ENCODE measurements at regions of chr5 and their contacts with region 1.

Region 1: DNA sequence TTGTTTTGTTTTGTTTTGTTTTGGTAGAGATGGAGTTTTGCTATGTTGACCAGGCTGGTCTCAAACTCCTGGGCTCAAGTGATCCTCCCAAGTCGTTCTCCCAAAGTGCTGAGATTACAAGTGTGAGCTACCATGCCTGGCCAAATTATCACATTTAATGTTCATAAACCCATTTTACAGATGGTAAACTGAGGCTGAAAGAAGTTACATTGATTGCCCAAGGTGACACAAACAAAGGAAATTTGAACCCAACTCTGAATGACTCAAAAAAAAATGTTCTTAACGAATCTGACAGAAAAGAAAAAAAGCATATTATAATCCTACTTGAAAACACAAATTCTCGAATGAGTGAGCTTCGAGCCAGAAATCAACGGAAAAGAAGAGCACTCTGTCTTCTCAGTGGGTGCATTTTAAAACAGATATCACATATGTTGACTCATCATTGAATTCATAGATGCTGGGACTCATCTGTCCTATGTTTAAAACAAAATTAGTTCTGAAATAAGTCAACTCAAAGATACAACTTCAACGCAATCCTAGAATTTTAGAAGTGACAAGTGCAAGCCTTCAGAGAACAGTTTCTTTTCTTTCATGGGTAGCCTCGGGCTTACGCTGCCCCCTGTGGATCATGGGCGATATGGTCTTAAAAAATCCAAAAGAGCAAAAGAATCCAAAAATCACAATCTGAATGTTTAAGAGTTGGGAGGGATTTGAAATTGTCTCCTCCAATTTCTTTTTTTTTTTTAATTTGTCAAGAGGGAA is 28.4 kb downstream of the TIMD4 start:
- DNase-seq: peak; percentile 24 to 68 (median 49)
- H3K4me3 ChIP-seq: no peak overlapping the region
- H3K4me3 Mint-ChIP-seq: peak overlapping the region in 6 of 7 donors; percentile 27 to 78 (median 74)
- H3K27ac ChIP-seq: no peak overlapping the region
- H3K27ac Mint-ChIP-seq: peak overlapping the region in 4 of 8 donors; percentile 35 to 81 (median 53)
- H3K4me1 ChIP-seq: peaks cover 19% of the 10 kb centered on the region
- H3K4me1 Mint-ChIP-seq: peaks cover 39 to 52% (median 43%) of the 10 kb centered on the region in 3 donors
- H3K27me3 ChIP-seq: no peaks in the 10 kb centered on the region
- H3K27me3 Mint-ChIP-seq: peaks cover 0 to under 1% of the 10 kb centered on the region in 2 donors

Region 2: DNA sequence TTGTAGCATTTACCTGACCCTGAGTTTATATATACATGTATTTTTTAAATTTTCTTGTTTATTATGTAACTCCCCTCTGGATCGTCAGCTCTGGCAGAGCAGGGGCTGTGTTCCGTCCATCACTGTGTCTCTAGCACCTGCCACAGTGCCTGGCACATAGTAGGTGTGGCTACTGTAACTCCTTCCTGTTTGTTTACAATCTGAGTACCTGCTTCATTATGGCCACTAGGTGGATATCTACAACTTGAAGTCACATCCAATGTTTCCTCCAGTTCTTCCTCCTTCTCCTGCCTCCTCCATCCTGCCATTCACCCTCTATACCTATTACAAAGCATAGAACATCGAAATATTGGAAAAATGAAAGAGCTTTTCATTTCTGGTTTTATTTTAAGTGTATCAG is 98.7 kb before region 1 on chr5:
- CTCF ChIA-PET with region 1: interaction called, 10 read pairs
- POLR2A ChIA-PET with region 1: no interaction called
- DNase-seq: no peak
- H3K4me3 ChIP-seq: no peak overlapping the region
- H3K4me3 Mint-ChIP-seq: no peak overlapping the region
- H3K27ac ChIP-seq: no peak overlapping the region
- H3K27ac Mint-ChIP-seq: peak overlapping the region in 1 of 8 donors; percentile 52
- H3K4me1 ChIP-seq: no peaks in the 10 kb centered on the region
- H3K4me1 Mint-ChIP-seq: peaks cover 0 to 8% (median 3%) of the 10 kb centered on the region in 3 donors
- H3K27me3 ChIP-seq: no peaks in the 10 kb centered on the region
- H3K27me3 Mint-ChIP-seq: peaks cover 1 to 3% of the 10 kb centered on the region in 2 donors

Region 3: GRCh38 chr5:156913719-156914370 is 20.8 kb before region 1 on chr5:
- CTCF ChIA-PET with region 1: interaction called, 12 read pairs
- POLR2A ChIA-PET with region 1: no interaction called
- DNase-seq: peak in 4 of 5 donors; percentile 5 to 51 (median 40)
- H3K4me3 ChIP-seq: peak overlapping the region; percentile 57
- H3K4me3 Mint-ChIP-seq: peak overlapping the region; percentile 51 to 91 (median 82)
- H3K27ac ChIP-seq: peak overlapping the region; percentile 1
- H3K27ac Mint-ChIP-seq: peak overlapping the region; percentile 79 to 98 (median 95)
- H3K4me1 ChIP-seq: peaks cover 30% of the 10 kb centered on the region
- H3K4me1 Mint-ChIP-seq: peaks cover 51 to 72% (median 63%) of the 10 kb centered on the region in 3 donors
- H3K27me3 ChIP-seq: no peaks in the 10 kb centered on the region
- H3K27me3 Mint-ChIP-seq: no peaks in the 10 kb centered on the region

Region 4: GRCh38 chr5:157004893-157005551 is 70.4 kb after region 1 on chr5:
- CTCF ChIA-PET with region 1: no interaction called
- POLR2A ChIA-PET with region 1: no interaction called
- DNase-seq: no peak
- H3K4me3 ChIP-seq: no peak overlapping the region
- H3K4me3 Mint-ChIP-seq: no peak overlapping the region
- H3K27ac ChIP-seq: no peak overlapping the region
- H3K27ac Mint-ChIP-seq: no peak overlapping the region
- H3K4me1 ChIP-seq: no peaks in the 10 kb centered on the region
- H3K4me1 Mint-ChIP-seq: peaks cover 0 to 2% (median 0%) of the 10 kb centered on the region in 3 donors
- H3K27me3 ChIP-seq: no peaks in the 10 kb centered on the region
- H3K27me3 Mint-ChIP-seq: peaks cover 0 to 7% of the 10 kb centered on the region in 2 donors